PC-9 (cell line): ENCODE measurements at regions of chr1 and their contacts with region 1.

Region 1: GRCh38 chr1:240027059-240027462 is 64.6 kb upstream of the FMN2 start:
- DNase-seq: peak in 1 of 2 experiments; percentile 35
- H3K4me3 ChIP-seq: no peak overlapping the region
- H3K27ac ChIP-seq: no peak overlapping the region
- H3K4me1 ChIP-seq: no peaks in the 10 kb centered on the region
- H3K27me3 ChIP-seq: peaks cover 18% of the 10 kb centered on the region; the same call in 1 of the 2 replicates
- CTCF ChIP-seq: peak; percentile 85

Region 2: GRCh38 chr1:239858058-239858457 is 169.0 kb before region 1 on chr1:
- CTCF ChIA-PET with region 1: no interaction called
- POLR2A ChIA-PET with region 1: no interaction called
- intact Hi-C with region 1: no loop called
- DNase-seq: peak; percentile 43 to 86
- H3K4me3 ChIP-seq: peak overlapping the region; percentile 4; the same call in 1 of the 2 replicates
- H3K27ac ChIP-seq: peak overlapping the region; percentile 75
- H3K4me1 ChIP-seq: peaks cover 34% of the 10 kb centered on the region
- H3K27me3 ChIP-seq: no peaks in the 10 kb centered on the region
- CTCF ChIP-seq: no peak

Region 3: DNA sequence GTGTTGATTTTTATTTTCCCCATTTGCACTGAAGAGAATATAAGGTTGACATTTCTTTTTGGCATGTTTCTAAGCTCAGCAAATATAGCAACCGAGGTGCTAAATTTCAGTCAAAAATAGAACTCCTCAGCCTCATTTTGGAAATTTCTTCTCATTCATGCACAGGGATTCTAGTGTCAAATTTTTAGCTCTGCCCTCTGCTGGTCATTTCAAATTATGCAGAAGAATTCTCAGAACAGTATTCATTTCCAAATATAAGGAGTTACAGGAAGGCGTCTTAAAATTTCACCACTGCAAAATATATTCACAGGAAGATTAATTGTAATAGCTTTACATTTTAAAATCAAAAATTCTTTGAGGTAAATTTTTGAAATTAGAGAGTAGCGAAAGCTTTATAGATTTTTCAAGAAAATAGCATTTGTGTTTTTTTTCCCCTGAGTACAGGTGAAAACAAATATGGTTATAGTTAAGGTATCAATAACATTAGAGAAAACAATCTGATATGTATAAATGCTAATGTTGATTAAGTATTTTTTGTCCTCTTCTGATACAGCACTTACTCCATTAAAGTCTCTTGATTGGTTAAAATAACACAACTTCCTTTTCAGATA is 122.5 kb after region 1 on chr1:
- CTCF ChIA-PET with region 1: no interaction called
- POLR2A ChIA-PET with region 1: no interaction called
- intact Hi-C with region 1: loop called (anchors 1 kb)
- DNase-seq: no peak
- H3K4me3 ChIP-seq: no peak overlapping the region
- H3K27ac ChIP-seq: no peak overlapping the region
- H3K4me1 ChIP-seq: no peaks in the 10 kb centered on the region
- H3K27me3 ChIP-seq: no peaks in the 10 kb centered on the region
- CTCF ChIP-seq: peak; percentile 78

Region 4: DNA sequence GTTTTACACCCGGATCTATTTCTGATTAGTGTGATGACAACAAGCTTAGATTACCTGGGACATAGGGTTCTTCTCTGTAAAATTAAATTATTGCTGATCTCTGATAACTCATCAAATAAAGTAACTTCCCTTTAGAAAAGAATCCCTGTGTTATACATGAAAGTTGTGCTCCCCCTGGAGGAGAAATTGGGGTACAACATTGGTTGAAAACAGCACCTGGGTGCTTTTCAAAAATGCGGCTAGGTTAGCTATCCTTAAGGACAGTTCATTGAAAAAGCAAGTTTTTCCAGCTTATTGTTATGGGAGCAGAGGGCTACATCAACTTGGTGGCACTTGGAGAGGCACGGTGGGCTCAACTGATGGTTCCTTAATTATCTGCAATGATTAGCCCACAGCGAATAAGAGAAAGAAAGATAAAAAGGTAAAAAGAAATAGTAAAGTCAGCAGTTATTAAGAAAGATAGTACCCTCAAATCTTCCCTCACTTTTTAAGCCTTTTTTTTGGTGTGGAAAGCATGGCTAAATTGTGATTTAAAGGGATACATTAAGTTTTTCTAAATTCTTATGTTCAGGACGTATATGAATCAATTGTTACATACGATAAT is 162.4 kb after region 1 on chr1:
- CTCF ChIA-PET with region 1: no interaction called
- POLR2A ChIA-PET with region 1: no interaction called
- intact Hi-C with region 1: loop called (anchors 2 kb)
- DNase-seq: peak in 1 of 2 experiments; percentile 18
- H3K4me3 ChIP-seq: no peak overlapping the region
- H3K27ac ChIP-seq: no peak overlapping the region
- H3K4me1 ChIP-seq: no peaks in the 10 kb centered on the region
- H3K27me3 ChIP-seq: peaks cover 23% of the 10 kb centered on the region
- CTCF ChIP-seq: peak; percentile 78

Region 5: GRCh38 chr1:240515505-240515904 is 488.4 kb after region 1 on chr1:
- CTCF ChIA-PET with region 1: no interaction called
- POLR2A ChIA-PET with region 1: no interaction called
- intact Hi-C with region 1: loop called (anchors 10 kb)
- DNase-seq: no peak
- H3K4me3 ChIP-seq: no peak overlapping the region
- H3K27ac ChIP-seq: no peak overlapping the region
- H3K4me1 ChIP-seq: no peaks in the 10 kb centered on the region
- H3K27me3 ChIP-seq: 0 out of 2 replicates have a peak, but pooled peaks cover 8% of the 10 kb centered on the region
- CTCF ChIP-seq: no peak

Region 6: DNA sequence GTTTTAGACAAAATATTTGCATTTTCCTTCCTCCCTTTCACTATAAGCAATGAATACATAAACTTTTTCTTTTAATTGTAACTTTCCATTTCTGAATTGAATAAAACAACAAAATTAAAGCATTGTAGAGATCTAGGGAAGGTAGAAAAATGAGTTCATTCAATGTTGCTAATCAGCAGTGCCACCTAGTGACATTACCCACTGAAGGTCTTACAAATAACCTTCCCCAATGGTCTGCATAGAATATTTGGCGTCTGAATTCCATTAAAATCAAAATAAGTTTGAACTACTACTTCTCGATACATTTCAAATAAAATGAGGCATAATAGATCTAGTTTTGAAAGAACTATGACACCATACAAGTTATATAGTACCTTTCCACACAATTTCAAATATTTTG is 1472.8 kb after region 1 on chr1:
- CTCF ChIA-PET with region 1: no interaction called
- POLR2A ChIA-PET with region 1: no interaction called
- intact Hi-C with region 1: loop called (anchors 5 kb)
- DNase-seq: no peak
- H3K4me3 ChIP-seq: no peak overlapping the region
- H3K27ac ChIP-seq: no peak overlapping the region
- H3K4me1 ChIP-seq: no peaks in the 10 kb centered on the region
- H3K27me3 ChIP-seq: no peaks in the 10 kb centered on the region
- CTCF ChIP-seq: peak; percentile 68